Activated naive CD4-positive, alpha-beta T cell treated with anti-CD3 and anti-CD28 coated beads for 36 hours (primary cell): ENCODE measurements at regions of chr14 and their contacts with region 1.

Region 1: DNA sequence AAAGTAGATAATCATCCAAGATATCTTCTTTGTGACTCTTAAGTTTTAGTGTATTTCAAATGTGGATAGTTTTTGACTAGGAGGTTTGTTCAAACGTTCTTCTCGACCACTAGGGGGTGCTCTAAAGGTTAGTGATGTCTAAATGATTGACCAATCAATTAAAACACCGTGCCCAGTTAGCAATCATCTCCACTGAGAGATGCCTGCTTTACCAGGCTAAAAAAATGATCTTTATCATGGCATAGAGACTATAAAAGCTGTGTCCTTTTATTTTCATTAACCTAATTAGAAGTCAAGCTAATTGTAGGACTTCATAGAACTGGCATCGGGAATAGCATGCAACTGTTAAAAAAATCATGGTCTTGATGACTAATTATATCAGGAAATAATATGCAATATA is 153.9 kb downstream of the PRKCH start:
- DNase-seq: no peak
- H3K4me3 Mint-ChIP-seq: peak overlapping the region; percentile 38
- H3K27ac Mint-ChIP-seq: peak overlapping the region; percentile 100
- H3K4me1 Mint-ChIP-seq: peaks cover 88% of the 10 kb centered on the region
- H3K27me3 Mint-ChIP-seq: no peaks in the 10 kb centered on the region

Region 2: DNA sequence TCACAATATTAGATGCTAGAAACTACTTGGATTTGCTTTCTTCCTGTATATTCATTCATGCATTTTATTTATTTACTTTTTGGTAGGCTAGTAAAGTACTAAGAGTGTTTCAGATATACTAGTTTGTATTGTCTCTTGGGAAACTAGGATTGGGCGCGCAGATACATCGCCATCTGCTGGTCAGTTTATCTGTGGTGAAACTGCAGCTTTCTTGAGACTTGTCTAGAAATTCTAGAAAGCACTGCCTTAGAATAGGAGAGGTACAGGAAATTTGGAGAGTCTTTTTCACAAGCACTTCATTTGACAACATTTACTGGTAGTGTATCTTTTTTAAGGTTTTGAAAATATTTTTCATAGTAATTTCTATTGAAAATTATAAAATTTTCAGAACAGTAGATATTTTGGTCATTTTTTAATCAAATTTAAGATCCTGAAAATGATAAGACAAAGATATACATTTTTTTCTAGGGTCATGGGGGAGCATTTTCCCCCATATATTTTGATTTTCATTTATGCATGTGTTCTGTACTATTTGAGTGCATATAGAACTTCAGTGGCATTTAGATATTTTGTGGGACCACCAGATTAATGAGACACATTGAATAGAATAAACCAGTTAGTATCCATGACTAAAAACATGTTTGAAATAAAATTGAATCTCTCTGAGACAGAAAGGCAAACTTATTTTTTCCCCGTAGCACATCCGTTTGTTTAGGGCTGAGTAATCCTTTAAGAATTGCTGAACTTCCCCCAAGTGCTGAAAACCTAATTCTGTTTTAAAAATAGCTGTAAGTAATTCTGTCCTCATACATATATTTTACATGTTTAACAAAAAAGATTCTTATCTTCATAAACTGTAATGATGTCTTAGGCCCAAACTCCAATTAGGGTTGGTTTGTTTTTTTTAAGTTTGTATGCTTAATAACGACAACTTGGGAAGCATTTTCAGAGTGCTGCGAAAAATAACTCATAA is 449.8 kb before region 1 on chr14:
- CTCF ChIA-PET with region 1: no interaction called
- intact Hi-C with region 1: no loop called
- DNase-seq: peak; percentile 76
- H3K4me3 Mint-ChIP-seq: no peak overlapping the region
- H3K27ac Mint-ChIP-seq: no peak overlapping the region
- H3K4me1 Mint-ChIP-seq: no peaks in the 10 kb centered on the region
- H3K27me3 Mint-ChIP-seq: no peaks in the 10 kb centered on the region

Region 3: GRCh38 chr14:61296719-61297502 is 178.4 kb before region 1 on chr14:
- CTCF ChIA-PET with region 1: interaction called, 3 read pairs
- intact Hi-C with region 1: loop called (anchors 1 kb)
- DNase-seq: peak; percentile 31
- H3K4me3 Mint-ChIP-seq: peak overlapping the region; percentile 36
- H3K27ac Mint-ChIP-seq: no peak overlapping the region
- H3K4me1 Mint-ChIP-seq: peaks cover 51% of the 10 kb centered on the region
- H3K27me3 Mint-ChIP-seq: no peaks in the 10 kb centered on the region

Region 4: GRCh38 chr14:61503167-61503801 is 28.0 kb after region 1 on chr14:
- CTCF ChIA-PET with region 1: interaction called, 130 read pairs
- intact Hi-C with region 1: loop called (anchors 1 kb)
- DNase-seq: peak; percentile 92
- H3K4me3 Mint-ChIP-seq: peak overlapping the region; percentile 66
- H3K27ac Mint-ChIP-seq: peak overlapping the region; percentile 100
- H3K4me1 Mint-ChIP-seq: peaks cover 97% of the 10 kb centered on the region
- H3K27me3 Mint-ChIP-seq: no peaks in the 10 kb centered on the region

Region 5: DNA sequence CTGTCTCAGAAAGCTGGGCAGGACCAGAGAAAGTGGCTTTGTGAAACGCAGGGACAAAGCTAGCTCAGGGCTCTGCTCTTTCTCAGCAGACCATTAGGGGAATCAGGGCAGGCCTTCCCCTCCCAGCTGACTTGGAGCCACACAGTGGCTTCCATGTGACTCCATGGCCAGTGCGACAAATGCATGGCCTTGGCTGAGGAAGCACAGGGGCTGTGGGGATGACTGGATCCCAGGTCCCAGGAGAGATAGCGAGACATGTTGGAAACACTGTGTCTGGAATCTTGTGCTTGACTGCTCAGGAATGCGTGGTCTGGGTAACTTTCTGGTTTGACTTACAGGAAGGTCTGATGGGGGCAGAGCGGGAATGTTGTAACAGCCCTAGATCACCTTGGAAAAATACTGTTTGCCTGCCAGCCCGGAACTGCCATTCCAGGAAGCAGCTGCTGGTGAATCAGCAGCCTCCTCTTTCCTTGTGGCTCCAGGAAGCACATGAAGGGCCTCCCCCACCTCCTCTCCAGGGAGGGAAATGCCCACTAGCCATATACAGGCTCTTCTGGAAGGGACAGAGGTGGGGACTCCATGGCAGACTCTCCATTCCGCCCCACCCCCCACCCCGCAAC is 86.5 kb after region 1 on chr14:
- CTCF ChIA-PET with region 1: interaction called, 4 read pairs
- intact Hi-C with region 1: loop called (anchors 2 kb)
- DNase-seq: no peak
- H3K4me3 Mint-ChIP-seq: no peak overlapping the region
- H3K27ac Mint-ChIP-seq: peak overlapping the region; percentile 75
- H3K4me1 Mint-ChIP-seq: peaks cover 73% of the 10 kb centered on the region
- H3K27me3 Mint-ChIP-seq: no peaks in the 10 kb centered on the region

Region 6: DNA sequence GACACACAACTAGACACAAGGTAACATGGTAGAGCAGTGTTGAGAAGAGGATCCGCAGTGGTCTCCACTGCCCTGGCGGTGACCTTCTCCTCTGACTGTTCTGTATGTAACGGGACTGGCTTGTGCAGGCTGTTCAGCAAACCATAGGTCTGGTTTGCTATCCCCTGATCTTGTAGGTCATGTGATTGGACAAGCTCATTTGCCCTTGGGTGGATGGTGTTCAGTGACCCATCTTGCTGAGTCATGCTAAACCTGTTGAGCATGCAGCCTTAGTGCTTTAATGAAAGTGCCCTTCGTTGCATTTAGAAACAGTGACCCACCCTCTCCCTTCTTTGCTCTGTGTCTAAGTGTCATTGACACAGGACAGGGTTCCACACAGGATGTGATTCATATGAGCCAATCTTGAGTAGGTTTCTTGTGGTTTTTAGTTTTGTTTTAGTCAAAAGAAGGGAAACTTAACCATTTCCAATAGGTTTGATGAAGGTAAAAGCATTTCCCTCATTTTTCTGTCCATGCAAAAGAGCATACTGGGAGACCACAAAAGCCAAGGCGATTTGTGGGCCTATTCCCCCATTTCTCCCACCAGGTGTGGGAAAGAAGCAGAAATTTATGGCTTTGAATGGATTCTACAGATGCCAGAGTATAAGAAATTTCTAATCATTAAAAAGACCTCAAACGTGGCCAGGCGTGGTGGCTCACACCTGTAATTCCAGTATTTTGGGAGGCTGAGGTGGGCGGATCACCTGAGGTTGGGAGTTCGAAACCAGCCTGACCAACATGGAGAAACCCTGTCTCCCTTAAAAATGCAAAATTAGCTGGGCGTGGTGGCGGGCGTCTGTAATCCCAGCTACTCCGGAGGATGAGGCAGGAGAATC is 187.4 kb after region 1 on chr14:
- CTCF ChIA-PET with region 1: interaction called, 9 read pairs
- intact Hi-C with region 1: loop called (anchors 1 kb)
- DNase-seq: peak; percentile 79
- H3K4me3 Mint-ChIP-seq: peak overlapping the region; percentile 63
- H3K27ac Mint-ChIP-seq: peak overlapping the region; percentile 98
- H3K4me1 Mint-ChIP-seq: peaks cover 69% of the 10 kb centered on the region
- H3K27me3 Mint-ChIP-seq: no peaks in the 10 kb centered on the region

Region 7: GRCh38 chr14:61837336-61838229 is 362.3 kb after region 1 on chr14:
- CTCF ChIA-PET with region 1: interaction called, 43 read pairs
- intact Hi-C with region 1: loop called (anchors 1 kb)
- DNase-seq: peak; percentile 88
- H3K4me3 Mint-ChIP-seq: no peak overlapping the region
- H3K27ac Mint-ChIP-seq: no peak overlapping the region
- H3K4me1 Mint-ChIP-seq: peaks cover 12% of the 10 kb centered on the region
- H3K27me3 Mint-ChIP-seq: no peaks in the 10 kb centered on the region

Region 8: GRCh38 chr14:62722406-62722805 is 1247.1 kb after region 1 on chr14:
- CTCF ChIA-PET with region 1: no interaction called
- intact Hi-C with region 1: no loop called
- DNase-seq: no peak
- H3K4me3 Mint-ChIP-seq: no peak overlapping the region
- H3K27ac Mint-ChIP-seq: no peak overlapping the region
- H3K4me1 Mint-ChIP-seq: no peaks in the 10 kb centered on the region
- H3K27me3 Mint-ChIP-seq: no peaks in the 10 kb centered on the region